ENCODE measurements at regions of chr7 and their contacts with region 1.

Region 1: GRCh38 chr7:55912748-55913158 is 25.5 kb downstream of the ZNF713 start:
- DNase-seq: no peak
- ATAC-seq: no peak
- H3K4me3 ChIP-seq: no peak overlapping the region
- H3K4me3 Mint-ChIP-seq: no peak overlapping the region
- H3K27ac ChIP-seq: no peak overlapping the region
- H3K27ac Mint-ChIP-seq: no peak overlapping the region
- H3K4me1 ChIP-seq: no peaks in the 10 kb centered on the region
- H3K4me1 Mint-ChIP-seq: no peaks in the 10 kb centered on the region
- H3K27me3 ChIP-seq: no peaks in the 10 kb centered on the region
- H3K27me3 Mint-ChIP-seq: no peaks in the 10 kb centered on the region

Region 2: GRCh38 chr7:55521917-55522902 is 390.5 kb before region 1 on chr7:
- CTCF ChIA-PET with region 1: interaction called in 1 of 2 experiments, 11 read pairs
- POLR2A ChIA-PET with region 1: no interaction called
- DNase-seq: no peak
- ATAC-seq: no peak
- H3K4me3 ChIP-seq: no peak overlapping the region
- H3K4me3 Mint-ChIP-seq: no peak overlapping the region
- H3K27ac ChIP-seq: no peak overlapping the region
- H3K27ac Mint-ChIP-seq: peak overlapping the region; percentile 5 to 27
- H3K4me1 ChIP-seq: peaks cover 0 to 31% of the 10 kb centered on the region in 2 experiments
- H3K4me1 Mint-ChIP-seq: peaks cover 53 to 89% (median 67%) of the 10 kb centered on the region in 3 donors
- H3K27me3 ChIP-seq: no peaks in the 10 kb centered on the region
- H3K27me3 Mint-ChIP-seq: no peaks in the 10 kb centered on the region

Region 3: GRCh38 chr7:55964261-55965099 is 51.7 kb after region 1 on chr7 and contains the start of gene NIPSNAP2:
- CTCF ChIA-PET with region 1: no interaction called
- POLR2A ChIA-PET with region 1: interaction called in 1 of 2 experiments, 11 read pairs
- DNase-seq: peak; percentile 4 to 84 (median 47)
- ATAC-seq: peak; percentile 85 to 93 (median 88)
- H3K4me3 ChIP-seq: peak within 1 kb of the TSS; percentile 46 to 82
- H3K4me3 Mint-ChIP-seq: peak within 1 kb of the TSS; percentile 74 to 85 (median 84)
- H3K27ac ChIP-seq: peak within 1 kb of the TSS; percentile 81
- H3K27ac Mint-ChIP-seq: peak within 1 kb of the TSS; percentile 88 to 92
- H3K4me1 ChIP-seq: peaks cover 2 to 31% of the 10 kb centered on the region in 2 experiments
- H3K4me1 Mint-ChIP-seq: peaks cover 41 to 46% (median 42%) of the 10 kb centered on the region in 3 donors
- H3K27me3 ChIP-seq: no peaks in the 10 kb centered on the region
- H3K27me3 Mint-ChIP-seq: no peaks in the 10 kb centered on the region
- total RNA-seq, gene NIPSNAP2: 24.1 to 38.6 (median 28.4) TPM

Measured in T-cell (primary cell).